ENCODE measurements at regions of chr5 and their contacts with region 1.

Region 1: DNA sequence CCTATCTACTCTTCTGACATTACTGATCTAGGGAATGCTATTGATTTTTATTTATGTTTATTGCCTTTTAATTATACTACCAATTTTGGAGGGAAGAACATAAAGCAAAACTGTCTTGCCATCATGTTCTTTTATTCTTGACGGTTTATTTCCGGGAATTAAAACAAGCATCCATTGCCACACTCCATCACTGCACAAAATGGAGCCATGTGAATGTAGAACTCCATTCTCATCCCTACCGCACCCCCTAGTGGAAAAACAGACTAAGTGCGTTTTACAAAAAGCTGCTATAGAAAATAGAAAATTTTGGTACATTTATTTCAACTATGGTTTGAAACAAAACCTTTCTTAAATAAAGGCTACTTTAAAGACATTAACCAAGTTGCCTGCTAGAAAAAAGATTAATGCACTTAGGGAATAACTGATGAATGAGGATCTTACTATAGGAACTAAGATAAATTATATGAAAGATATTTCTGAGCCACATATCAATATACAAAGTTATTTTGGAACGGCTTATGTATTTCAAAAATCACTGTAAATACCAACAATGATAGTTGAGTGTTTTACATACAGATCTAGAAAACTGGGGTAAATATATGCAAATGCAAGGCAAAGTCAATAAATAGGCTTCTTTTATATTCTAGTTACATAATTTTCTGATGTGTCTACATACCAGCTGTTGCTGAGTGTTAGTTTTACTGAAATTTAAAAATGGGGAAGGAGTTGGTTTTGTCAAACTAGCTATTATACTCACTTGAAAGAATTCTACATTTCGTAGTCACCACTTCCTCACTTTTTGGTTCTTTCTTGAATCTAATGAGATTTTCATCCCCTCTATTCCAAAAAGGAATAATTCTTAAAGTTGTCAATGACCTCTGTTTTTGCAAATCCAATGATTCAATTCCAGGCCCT is 26.5 kb downstream of the OXCT1 start:
- DNase-seq: peak; percentile 71
- H3K4me3 Mint-ChIP-seq: no peak overlapping the region
- H3K27ac Mint-ChIP-seq: no peak overlapping the region
- H3K4me1 Mint-ChIP-seq: no peaks in the 10 kb centered on the region
- H3K27me3 Mint-ChIP-seq: no peaks in the 10 kb centered on the region
- CTCF ChIP-seq: peak; percentile 70

Region 2: GRCh38 chr5:41270423-41271251 is 573.1 kb before region 1 on chr5:
- CTCF ChIA-PET with region 1: interaction called, 5 read pairs
- POLR2A ChIA-PET with region 1: no interaction called
- intact Hi-C with region 1: loop called (anchors 1 kb)
- DNase-seq: peak; percentile 69
- H3K4me3 Mint-ChIP-seq: no peak overlapping the region
- H3K27ac Mint-ChIP-seq: no peak overlapping the region
- H3K4me1 Mint-ChIP-seq: no peaks in the 10 kb centered on the region
- H3K27me3 Mint-ChIP-seq: peaks cover 18% of the 10 kb centered on the region
- CTCF ChIP-seq: peak; percentile 60

Region 3: DNA sequence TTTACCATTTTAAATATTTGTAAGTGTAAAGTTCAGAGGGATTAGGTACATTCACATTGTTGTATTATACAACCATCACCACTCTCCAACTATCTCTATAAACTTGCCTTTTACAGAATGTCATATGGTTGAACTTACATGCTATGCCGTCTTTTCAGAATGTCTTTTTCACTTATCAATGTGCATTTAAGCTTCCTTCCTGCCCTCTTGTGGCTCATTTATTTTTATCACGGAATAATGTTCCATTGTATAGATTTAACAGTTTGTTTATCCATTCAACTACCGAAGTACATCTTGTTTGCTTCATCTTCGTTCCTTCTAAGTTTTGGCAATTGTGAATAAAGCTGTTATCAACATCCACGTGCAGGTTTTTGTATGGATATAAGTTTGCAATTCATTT is 497.1 kb before region 1 on chr5:
- CTCF ChIA-PET with region 1: no interaction called
- POLR2A ChIA-PET with region 1: no interaction called
- intact Hi-C with region 1: loop called (anchors 2 kb)
- DNase-seq: peak; percentile 16
- H3K4me3 Mint-ChIP-seq: no peak overlapping the region
- H3K27ac Mint-ChIP-seq: no peak overlapping the region
- H3K4me1 Mint-ChIP-seq: no peaks in the 10 kb centered on the region
- H3K27me3 Mint-ChIP-seq: peaks cover 13% of the 10 kb centered on the region
- CTCF ChIP-seq: no peak

Region 4: GRCh38 chr5:41524174-41524573 is 319.5 kb before region 1 on chr5:
- CTCF ChIA-PET with region 1: no interaction called
- POLR2A ChIA-PET with region 1: no interaction called
- intact Hi-C with region 1: loop called (anchors 10 kb)
- DNase-seq: peak; percentile 24
- H3K4me3 Mint-ChIP-seq: no peak overlapping the region
- H3K27ac Mint-ChIP-seq: no peak overlapping the region
- H3K4me1 Mint-ChIP-seq: peaks cover 13% of the 10 kb centered on the region
- H3K27me3 Mint-ChIP-seq: peaks cover 34% of the 10 kb centered on the region
- CTCF ChIP-seq: no peak

Region 5: GRCh38 chr5:41641621-41642020 is 202.1 kb before region 1 on chr5:
- CTCF ChIA-PET with region 1: interaction called, 3 read pairs
- POLR2A ChIA-PET with region 1: no interaction called
- intact Hi-C with region 1: loop called (anchors 2 kb)
- DNase-seq: peak; percentile 9
- H3K4me3 Mint-ChIP-seq: no peak overlapping the region
- H3K27ac Mint-ChIP-seq: no peak overlapping the region
- H3K4me1 Mint-ChIP-seq: no peaks in the 10 kb centered on the region
- H3K27me3 Mint-ChIP-seq: peaks cover 11% of the 10 kb centered on the region
- CTCF ChIP-seq: no peak

Region 6: DNA sequence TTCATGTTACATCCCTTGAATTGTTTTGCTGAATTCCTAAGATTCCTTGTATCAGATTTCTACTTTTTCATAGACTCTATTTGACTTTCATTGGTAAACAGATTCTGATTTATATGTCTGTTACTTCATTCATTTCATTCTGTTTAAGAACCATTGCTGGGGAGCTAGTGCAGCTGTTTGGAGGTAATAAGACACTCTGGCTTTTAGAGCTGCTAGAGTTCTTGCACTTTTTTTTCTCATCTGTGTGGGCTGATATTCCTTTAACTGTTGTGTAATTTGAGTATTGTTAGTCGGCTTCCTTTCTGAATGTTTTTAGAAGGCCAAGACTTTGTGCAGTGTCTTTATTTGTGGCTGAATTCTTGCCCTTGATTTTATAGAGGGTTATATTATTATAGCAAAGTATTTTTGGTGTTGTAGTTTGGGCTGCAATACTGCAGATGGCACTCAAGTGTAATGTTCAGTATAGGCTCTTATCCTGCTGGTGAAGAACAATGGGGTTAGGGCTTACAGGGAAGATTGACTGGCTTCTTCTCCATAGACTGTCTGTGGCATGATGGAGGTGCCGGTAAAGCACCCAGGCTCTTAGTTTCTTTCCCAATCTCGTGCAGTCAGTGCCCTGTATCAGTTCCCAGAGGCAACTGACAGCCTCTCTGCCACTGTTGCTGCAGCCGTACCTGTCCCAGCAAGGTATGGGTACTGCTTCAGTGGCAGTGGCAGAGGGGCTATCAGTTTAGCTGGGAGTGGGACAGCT is 135.7 kb before region 1 on chr5:
- CTCF ChIA-PET with region 1: interaction called, 42 read pairs
- POLR2A ChIA-PET with region 1: interaction called, 3 read pairs
- intact Hi-C with region 1: loop called (anchors 1 kb)
- DNase-seq: peak; percentile 56
- H3K4me3 Mint-ChIP-seq: no peak overlapping the region
- H3K27ac Mint-ChIP-seq: no peak overlapping the region
- H3K4me1 Mint-ChIP-seq: peaks cover 6% of the 10 kb centered on the region
- H3K27me3 Mint-ChIP-seq: peaks cover 22% of the 10 kb centered on the region
- CTCF ChIP-seq: peak; percentile 54

Region 7: GRCh38 chr5:41738710-41739354 is 104.9 kb before region 1 on chr5:
- CTCF ChIA-PET with region 1: no interaction called
- POLR2A ChIA-PET with region 1: no interaction called
- intact Hi-C with region 1: no loop called
- DNase-seq: no peak
- H3K4me3 Mint-ChIP-seq: no peak overlapping the region
- H3K27ac Mint-ChIP-seq: peak overlapping the region; percentile 8
- H3K4me1 Mint-ChIP-seq: no peaks in the 10 kb centered on the region
- H3K27me3 Mint-ChIP-seq: no peaks in the 10 kb centered on the region
- CTCF ChIP-seq: no peak

Region 8: GRCh38 chr5:41754857-41755256 is 88.9 kb before region 1 on chr5:
- CTCF ChIA-PET with region 1: interaction called, 20 read pairs
- POLR2A ChIA-PET with region 1: no interaction called
- intact Hi-C with region 1: loop called (anchors 1 kb)
- DNase-seq: peak; percentile 23
- H3K4me3 Mint-ChIP-seq: no peak overlapping the region
- H3K27ac Mint-ChIP-seq: no peak overlapping the region
- H3K4me1 Mint-ChIP-seq: no peaks in the 10 kb centered on the region
- H3K27me3 Mint-ChIP-seq: no peaks in the 10 kb centered on the region
- CTCF ChIP-seq: no peak